ENCODE measurements at regions of chrX and their contacts with region 1.

Region 1: DNA sequence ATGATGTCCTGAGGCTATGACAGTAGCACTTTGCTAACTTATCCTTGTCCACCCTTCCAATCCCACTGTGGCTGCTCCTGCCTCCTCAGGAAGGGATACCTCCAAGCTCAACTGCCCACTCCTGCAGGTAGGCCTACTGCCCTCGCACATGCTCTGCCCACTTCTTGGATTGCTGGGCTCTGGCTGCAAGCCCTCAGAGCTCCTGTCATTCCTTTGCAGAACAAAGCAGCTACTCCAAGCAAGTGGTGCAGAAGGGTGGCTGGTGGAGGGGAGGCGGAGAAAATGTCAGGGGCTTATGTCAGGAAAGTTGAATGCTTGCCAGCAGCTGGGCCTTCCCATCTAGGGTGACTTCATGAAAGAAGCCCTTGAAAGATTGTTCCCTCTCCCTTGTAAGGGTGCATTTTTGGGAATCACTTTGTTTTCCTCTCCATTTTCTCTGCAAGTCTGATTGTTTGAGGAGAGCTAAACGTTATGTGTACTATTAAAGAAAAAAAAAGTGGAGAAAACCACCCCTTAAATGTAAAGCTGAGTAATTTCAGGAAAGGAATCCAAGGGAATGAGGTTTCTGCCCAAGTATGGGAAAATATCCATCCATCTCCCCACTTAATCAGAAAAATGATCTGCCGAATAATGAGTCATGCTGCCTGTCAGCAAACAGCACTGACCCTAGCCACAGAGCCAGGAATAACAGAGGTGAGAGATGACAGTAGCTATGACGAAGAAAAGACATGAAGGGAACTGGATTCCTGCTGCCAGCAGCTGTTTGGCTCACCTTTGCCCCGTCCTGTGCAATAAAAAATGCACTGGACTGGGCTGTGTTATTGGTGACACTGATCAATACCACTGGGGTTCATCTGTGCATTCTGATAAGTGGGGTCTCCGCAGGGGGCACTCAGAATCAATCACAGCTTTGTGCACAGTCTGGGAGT is 102.0 kb downstream of the RTL5 start:
- DNase-seq: no peak

Region 2: GRCh38 chrX:71976753-71977152 is 53.0 kb before region 1 on chrX:
- CTCF ChIA-PET with region 1: no interaction called
- POLR2A ChIA-PET with region 1: no interaction called
- DNase-seq: no peak

Region 3: GRCh38 chrX:72045552-72046277 is 16.0 kb after region 1 on chrX:
- CTCF ChIA-PET with region 1: interaction called, 4 read pairs
- POLR2A ChIA-PET with region 1: interaction called, 40 read pairs
- DNase-seq: peak; percentile 56

Region 4: GRCh38 chrX:72121383-72121782 is 91.6 kb after region 1 on chrX:
- CTCF ChIA-PET with region 1: interaction called, 7 read pairs
- POLR2A ChIA-PET with region 1: interaction called, 14 read pairs
- DNase-seq: no peak

Region 5: DNA sequence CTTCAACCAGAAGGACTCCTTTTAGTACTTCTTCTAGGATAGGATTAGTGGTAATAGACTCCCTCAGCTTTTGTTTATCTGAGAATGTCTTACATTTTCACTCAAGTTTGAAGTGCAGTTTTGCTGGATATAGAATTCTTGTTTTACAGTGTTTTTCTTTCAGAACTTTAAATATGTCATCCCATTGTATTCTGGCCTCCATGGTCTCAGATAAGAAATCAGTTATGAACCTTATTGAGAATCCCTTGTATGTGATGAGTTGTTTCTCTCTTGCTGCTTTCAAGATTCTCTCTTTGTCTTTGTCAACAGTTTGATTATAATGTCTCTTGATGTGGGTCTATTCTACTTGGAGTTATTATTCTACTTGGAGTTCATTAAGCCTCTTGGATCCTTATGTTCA is 392.1 kb after region 1 on chrX:
- CTCF ChIA-PET with region 1: no interaction called
- POLR2A ChIA-PET with region 1: no interaction called
- DNase-seq: no peak